Heart left ventricle (tissue), 16 donors: ENCODE measurements at regions of chr17 and their contacts with region 1.

Region 1: GRCh38 chr17:4823373-4824089 is 9.6 kb upstream of the MINK1 start:
- DNase-seq: no peak
- ATAC-seq: no peak
- H3K4me3 ChIP-seq: no peak overlapping the region
- H3K27ac ChIP-seq: no peak overlapping the region
- H3K4me1 ChIP-seq: no peaks in the 10 kb centered on the region
- H3K27me3 ChIP-seq: no peaks in the 10 kb centered on the region
- CTCF ChIP-seq: no peak
- POLR2A ChIP-seq: no peak

Region 2: DNA sequence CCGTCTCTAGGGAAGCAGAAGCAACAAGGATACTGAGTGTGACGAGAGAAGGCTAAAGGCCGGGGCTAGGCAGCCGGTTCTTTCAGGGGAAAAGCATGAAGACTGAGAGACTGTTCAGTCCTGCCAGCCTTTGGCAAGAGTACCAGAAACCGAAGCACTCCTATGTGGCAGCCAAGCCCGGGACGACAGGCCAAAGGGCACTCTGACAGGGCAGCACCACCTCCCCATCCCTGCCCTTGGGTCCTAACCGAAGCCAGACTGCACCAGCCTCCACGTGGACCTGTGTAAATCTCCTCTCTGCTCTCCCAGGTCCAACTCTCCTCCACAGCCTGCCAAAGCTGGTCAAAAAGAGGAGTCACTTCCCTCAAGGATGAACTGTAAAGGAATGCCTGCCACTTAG is 158.5 kb before region 1 on chr17:
- intact Hi-C with region 1: no loop called
- DNase-seq: no peak
- ATAC-seq: peak in 1 of 4 donors; percentile 20
- H3K4me3 ChIP-seq: no peak overlapping the region
- H3K27ac ChIP-seq: no peak overlapping the region
- H3K4me1 ChIP-seq: no peaks in the 10 kb centered on the region
- H3K27me3 ChIP-seq: peaks cover 0 to 5% (median 0%) of the 10 kb centered on the region in 9 donors
- CTCF ChIP-seq: no peak
- POLR2A ChIP-seq: no peak

Region 3: GRCh38 chr17:4872786-4873185 is 49.3 kb after region 1 on chr17:
- intact Hi-C with region 1: loop called in 1 of 10 experiments (anchors 10 kb)
- DNase-seq: no peak
- ATAC-seq: peak in 3 of 4 donors; percentile 16 to 66 (median 62)
- H3K4me3 ChIP-seq: no peak overlapping the region
- H3K27ac ChIP-seq: peak overlapping the region in 1 of 12 donors; percentile 60
- H3K4me1 ChIP-seq: peaks cover 0 to 37% (median 0%) of the 10 kb centered on the region in 12 donors
- H3K27me3 ChIP-seq: no peaks in the 10 kb centered on the region
- CTCF ChIP-seq: no peak
- POLR2A ChIP-seq: no peak